ENCODE measurements at regions of chr1 and their contacts with region 1.

Region 1: DNA sequence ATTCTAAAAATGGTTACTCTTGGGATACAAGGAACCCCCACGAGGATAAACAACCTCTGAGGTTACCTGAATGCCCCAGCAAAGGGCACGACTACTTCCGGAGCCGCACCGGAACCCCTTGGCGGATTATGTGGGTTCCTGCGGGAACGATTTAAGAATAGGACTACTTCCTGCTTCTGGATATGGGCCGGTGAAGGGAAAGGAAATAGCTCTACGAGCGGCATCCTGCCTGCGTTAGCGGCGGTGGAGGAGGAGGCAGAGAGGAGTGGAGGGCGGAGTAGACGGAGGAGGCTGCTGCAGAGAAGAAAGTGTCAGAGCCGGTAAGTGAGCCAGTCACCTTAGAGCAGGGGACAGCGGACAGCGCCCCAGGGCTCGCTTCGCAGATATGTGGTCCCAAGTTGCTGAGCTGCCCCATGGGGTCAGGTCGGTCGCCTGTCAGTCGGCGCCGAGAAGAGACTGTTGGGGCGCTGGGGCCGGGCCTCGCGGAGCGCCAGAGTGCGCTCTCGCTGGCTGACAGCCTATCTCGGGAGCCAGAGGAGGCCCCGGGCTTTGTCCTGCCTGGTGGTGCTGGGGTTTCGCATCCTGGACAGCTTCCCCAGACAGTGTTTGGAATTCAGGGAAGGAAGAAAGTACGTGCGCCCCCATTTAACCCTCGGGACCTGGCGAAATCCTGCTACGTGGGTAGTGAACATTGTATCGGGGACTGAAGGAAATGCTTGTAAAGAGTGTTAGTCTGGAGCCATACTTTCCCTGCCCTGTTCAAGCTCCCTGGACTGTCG is at the start of gene KLHL20:
- DNase-seq: peak; percentile 90
- total RNA-seq, gene KLHL20: 17.1 TPM

Region 2: GRCh38 chr1:173476664-173477285 is 238.2 kb before region 1 on chr1:
- intact Hi-C with region 1: loop called (anchors 2 kb)
- DNase-seq: peak; percentile 96

Region 3: GRCh38 chr1:173682176-173682575 is 32.8 kb before region 1 on chr1:
- intact Hi-C with region 1: no loop called
- DNase-seq: no peak

Region 4: GRCh38 chr1:173867753-173868265 is 152.9 kb after region 1 on chr1 and contains the start of gene GAS5:
- intact Hi-C with region 1: no loop called
- DNase-seq: peak; percentile 99
- total RNA-seq, gene GAS5: 58.0 TPM

Region 5: GRCh38 chr1:174097426-174097825 is 382.5 kb after region 1 on chr1:
- intact Hi-C with region 1: no loop called
- DNase-seq: no peak